ENCODE measurements at regions of chr11 and their contacts with region 1.

Region 1: GRCh38 chr11:62841361-62842184 is 2.2 kb upstream of the WDR74 start:
- DNase-seq: peak; percentile 96 to 98
- H3K4me3 ChIP-seq: peak overlapping the region; percentile 99
- H3K4me3 Mint-ChIP-seq: no peak overlapping the region
- H3K27ac Mint-ChIP-seq: no peak overlapping the region
- H3K4me1 ChIP-seq: no peaks in the 10 kb centered on the region
- H3K4me1 Mint-ChIP-seq: peaks cover 25% of the 10 kb centered on the region
- H3K27me3 ChIP-seq: no peaks in the 10 kb centered on the region
- H3K27me3 Mint-ChIP-seq: peaks cover 2% of the 10 kb centered on the region
- CTCF ChIP-seq: no peak

Region 2: DNA sequence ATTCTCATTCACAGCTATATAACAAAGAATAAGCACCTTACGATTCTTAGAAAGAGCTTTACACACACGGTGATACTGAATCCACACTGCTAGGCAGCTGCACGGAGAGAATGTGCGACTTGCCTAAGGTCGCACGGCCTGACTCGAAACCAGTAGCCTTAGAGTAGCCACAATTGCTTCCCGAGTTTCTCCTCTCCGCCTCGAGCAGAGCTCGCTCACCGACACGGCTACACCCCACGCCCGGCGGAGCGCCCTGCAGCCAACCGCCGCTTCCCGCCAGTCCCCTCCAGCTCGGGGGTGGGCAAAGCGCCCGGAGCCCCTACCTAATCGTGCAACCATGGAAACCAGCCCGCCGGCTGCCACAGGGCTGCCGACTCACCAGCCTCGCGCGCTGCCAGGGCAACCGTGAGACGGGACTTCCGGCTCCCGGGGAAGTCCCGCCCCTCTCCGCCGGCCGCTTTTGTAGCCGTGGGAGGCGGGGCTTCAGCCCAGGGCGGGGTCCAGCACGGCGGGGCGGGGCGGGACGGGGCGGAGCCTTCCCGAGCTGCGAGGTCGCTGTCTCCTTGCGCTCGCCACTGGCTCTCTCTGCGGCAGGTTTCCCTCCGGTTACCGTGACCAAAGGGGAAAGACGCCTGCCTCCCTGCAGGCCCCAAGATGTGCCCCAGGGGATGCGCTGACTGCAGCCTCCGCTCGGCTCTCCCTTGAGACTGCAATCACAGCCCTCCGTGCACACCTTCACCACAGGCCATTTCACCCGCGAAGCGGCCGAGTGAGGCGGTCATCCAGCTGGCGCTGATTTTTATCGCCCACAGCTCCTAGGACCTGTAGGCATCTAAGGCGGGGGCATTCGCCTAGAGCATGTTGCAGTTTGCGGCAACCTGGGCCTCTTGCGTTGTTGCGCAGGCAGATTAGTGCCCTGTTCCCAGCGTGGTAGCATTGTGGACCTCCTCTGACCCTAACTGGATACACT is 135.4 kb before region 1 on chr11:
- CTCF ChIA-PET with region 1: interaction called, 14 read pairs
- POLR2A ChIA-PET with region 1: no interaction called
- intact Hi-C with region 1: no loop called
- DNase-seq: peak; percentile 91 to 95
- H3K4me3 ChIP-seq: peak overlapping the region; percentile 55
- H3K4me3 Mint-ChIP-seq: peak overlapping the region; percentile 96
- H3K27ac Mint-ChIP-seq: peak overlapping the region; percentile 97
- H3K4me1 ChIP-seq: peaks cover 9% of the 10 kb centered on the region; the same call in 1 of the 2 replicates
- H3K4me1 Mint-ChIP-seq: peaks cover 18% of the 10 kb centered on the region
- H3K27me3 ChIP-seq: no peaks in the 10 kb centered on the region
- H3K27me3 Mint-ChIP-seq: no peaks in the 10 kb centered on the region
- CTCF ChIP-seq: no peak

Region 3: DNA sequence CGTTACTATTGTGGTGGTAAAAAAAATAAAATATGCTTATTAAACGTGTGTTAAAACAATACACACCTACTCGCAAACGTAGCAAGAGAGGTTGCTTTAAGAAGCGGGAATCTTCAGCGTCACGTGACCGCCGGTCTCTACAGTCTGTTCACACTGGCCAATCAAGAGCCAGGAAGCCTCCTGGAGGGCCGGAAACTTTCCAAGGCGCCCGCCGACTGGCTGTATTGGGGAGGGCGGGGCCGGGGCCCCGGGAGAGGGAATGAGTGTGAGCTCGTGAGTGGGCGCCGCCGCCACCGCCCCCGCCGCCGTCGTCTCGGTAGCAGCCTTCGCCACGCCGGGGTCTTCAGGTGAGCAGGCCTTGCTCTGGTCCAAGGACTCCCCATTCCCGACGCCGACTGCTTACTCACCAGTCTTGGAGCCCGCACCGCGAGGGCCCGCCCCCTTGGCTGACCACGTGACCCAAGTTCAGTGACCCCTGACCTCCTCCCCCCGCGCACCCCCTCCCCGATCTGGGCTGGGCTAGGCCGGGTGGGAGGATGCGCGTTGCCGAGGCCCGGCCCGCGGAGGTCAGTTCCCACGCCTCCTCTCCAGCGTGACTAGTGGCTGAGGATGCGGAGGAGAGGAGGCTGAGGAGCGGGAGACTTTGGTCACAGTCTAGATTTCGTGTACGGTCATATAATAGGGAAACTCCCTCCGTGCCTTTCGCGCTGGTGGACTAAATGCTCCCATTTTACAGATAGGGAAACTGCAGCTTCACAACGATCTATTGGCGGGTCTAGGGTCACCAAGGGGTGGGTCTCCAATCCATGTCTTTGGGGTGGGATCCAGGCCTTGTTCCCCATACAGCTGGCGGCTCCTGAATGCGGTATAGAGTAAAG is 70.2 kb before region 1 on chr11 and contains the start of gene TAF6L:
- CTCF ChIA-PET with region 1: interaction called, 4 read pairs
- POLR2A ChIA-PET with region 1: interaction called, 10 read pairs
- intact Hi-C with region 1: no loop called
- DNase-seq: peak; percentile 97 to 99
- H3K4me3 ChIP-seq: peak within 1 kb of the TSS; percentile 81
- H3K4me3 Mint-ChIP-seq: peak within 1 kb of the TSS; percentile 92
- H3K27ac Mint-ChIP-seq: peak within 1 kb of the TSS; percentile 99
- H3K4me1 ChIP-seq: peaks cover 6% of the 10 kb centered on the region
- H3K4me1 Mint-ChIP-seq: no peaks in the 10 kb centered on the region
- H3K27me3 ChIP-seq: no peaks in the 10 kb centered on the region
- H3K27me3 Mint-ChIP-seq: no peaks in the 10 kb centered on the region
- CTCF ChIP-seq: no peak
- total RNA-seq, gene TAF6L: 26.8 and 30.1 TPM in 2 replicates

Region 4: DNA sequence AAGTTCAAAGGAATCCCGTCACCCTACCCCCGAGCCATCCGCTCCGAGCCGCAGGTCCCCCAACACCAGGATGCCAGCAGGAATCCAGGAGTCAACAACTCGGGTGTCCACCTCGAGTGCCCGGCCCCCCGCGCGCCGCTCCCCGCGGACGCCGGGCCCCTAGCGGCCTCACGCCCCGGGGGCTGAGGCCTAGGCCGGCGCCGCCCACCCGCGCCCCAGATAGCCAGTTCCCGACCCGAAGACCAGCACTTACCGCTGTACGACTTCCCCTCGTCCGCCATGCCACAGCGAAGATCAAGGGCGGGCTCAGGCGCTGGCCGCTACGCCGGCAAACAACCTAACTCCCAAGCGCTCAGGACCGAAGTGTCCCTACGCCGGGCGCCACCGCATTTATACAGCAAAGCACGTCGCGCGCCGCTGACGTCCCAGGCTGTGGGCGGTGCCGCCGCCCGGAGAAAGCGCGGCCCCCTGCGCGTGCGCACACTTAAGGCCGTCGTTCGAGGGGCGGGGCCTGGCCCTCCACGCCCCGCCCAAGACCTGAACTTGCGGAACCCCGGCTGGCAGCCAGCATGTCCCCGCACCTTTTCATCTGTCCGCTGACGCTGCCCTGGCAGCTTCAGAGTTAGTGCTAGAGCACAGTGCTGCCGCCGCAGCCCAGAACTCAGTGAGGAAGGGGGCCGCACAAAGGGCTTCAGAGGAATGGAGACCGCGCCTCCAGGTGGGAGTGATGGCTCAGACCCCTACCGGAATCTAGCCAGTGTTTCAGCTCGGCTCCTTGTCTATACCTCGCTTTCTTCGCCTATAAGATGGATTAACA is 36.3 kb before region 1 on chr11 and contains the start of gene NXF1:
- CTCF ChIA-PET with region 1: no interaction called
- POLR2A ChIA-PET with region 1: interaction called, 15 read pairs
- intact Hi-C with region 1: no loop called
- DNase-seq: peak; percentile 94 to 98
- H3K4me3 ChIP-seq: peak within 1 kb of the TSS; percentile 58
- H3K4me3 Mint-ChIP-seq: peak within 1 kb of the TSS; percentile 92
- H3K27ac Mint-ChIP-seq: peak within 1 kb of the TSS; percentile 98
- H3K4me1 ChIP-seq: no peaks in the 10 kb centered on the region; the same call in 1 of the 2 replicates
- H3K4me1 Mint-ChIP-seq: peaks cover 11% of the 10 kb centered on the region
- H3K27me3 ChIP-seq: no peaks in the 10 kb centered on the region
- H3K27me3 Mint-ChIP-seq: no peaks in the 10 kb centered on the region
- CTCF ChIP-seq: peak in 1 of 2 experiments; percentile 27
- total RNA-seq, gene NXF1: 77.5 and 77.6 TPM in 2 replicates

Region 5: DNA sequence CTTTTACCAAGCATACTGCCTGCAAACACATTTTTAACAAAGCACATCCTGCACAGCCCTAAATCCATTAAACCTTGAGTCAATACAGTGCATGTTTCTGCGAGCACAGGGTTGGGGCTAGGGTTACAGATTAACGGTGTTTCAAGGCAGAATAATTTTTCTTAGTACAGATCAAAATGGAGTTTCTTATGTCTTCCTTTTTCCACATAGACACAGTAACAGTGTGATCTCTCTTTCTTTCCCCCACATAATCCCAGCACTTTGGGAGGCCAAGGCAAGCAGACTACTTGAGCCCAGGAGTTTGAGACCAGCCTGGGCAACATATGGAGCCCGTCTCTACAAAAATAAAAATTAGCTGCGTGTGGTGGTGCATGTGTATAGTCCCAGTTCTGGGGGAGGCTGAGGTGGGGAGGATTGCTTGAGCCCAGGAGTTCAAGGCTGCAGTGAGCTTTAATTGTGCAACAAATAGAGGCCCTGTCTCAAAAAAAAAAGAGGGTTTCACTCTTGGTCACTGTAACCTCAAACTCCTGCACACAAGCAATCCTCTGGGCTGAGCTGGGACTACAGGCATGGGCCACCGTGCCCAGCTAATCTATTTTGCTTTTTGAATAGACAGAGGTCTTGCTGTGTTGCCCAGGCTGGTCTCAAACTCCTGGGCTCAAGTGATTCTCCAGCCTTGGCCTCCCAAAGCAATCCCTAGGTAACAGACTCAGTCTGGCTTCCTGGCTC is 19.4 kb after region 1 on chr11:
- CTCF ChIA-PET with region 1: no interaction called
- POLR2A ChIA-PET with region 1: interaction called, 59 read pairs
- intact Hi-C with region 1: loop called (anchors 1 kb)
- DNase-seq: no peak
- H3K4me3 ChIP-seq: no peak overlapping the region
- H3K4me3 Mint-ChIP-seq: peak overlapping the region; percentile 42
- H3K27ac Mint-ChIP-seq: peak overlapping the region; percentile 51
- H3K4me1 ChIP-seq: peaks cover 29% of the 10 kb centered on the region
- H3K4me1 Mint-ChIP-seq: peaks cover 47% of the 10 kb centered on the region
- H3K27me3 ChIP-seq: no peaks in the 10 kb centered on the region
- H3K27me3 Mint-ChIP-seq: no peaks in the 10 kb centered on the region
- CTCF ChIP-seq: no peak

Region 6: DNA sequence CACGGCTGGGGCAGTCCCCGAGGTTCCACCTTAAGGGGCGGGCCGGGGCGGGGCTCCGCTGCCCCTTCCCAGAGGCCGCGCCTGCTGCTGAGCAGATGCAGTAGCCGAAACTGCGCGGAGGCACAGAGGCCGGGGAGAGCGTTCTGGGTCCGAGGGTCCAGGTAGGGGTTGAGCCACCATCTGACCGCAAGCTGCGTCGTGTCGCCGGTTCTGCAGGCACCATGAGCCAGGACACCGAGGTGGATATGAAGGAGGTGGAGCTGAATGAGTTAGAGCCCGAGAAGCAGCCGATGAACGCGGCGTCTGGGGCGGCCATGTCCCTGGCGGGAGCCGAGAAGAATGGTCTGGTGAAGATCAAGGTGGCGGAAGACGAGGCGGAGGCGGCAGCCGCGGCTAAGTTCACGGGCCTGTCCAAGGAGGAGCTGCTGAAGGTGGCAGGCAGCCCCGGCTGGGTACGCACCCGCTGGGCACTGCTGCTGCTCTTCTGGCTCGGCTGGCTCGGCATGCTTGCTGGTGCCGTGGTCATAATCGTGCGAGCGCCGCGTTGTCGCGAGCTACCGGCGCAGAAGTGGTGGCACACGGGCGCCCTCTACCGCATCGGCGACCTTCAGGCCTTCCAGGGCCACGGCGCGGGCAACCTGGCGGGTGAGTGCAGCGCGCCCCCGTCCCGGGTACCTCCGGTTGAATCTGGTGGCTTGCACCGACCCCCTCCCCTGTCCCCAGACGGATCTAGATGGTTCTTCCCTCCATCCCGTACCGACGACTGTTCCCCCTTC is 39.4 kb after region 1 on chr11 and contains the start of gene SLC3A2:
- CTCF ChIA-PET with region 1: interaction called, 3 read pairs
- POLR2A ChIA-PET with region 1: interaction called, 17 read pairs
- intact Hi-C with region 1: loop called (anchors 1 kb)
- DNase-seq: peak; percentile 87 to 92
- H3K4me3 ChIP-seq: peak within 1 kb of the TSS; percentile 99
- H3K4me3 Mint-ChIP-seq: peak within 1 kb of the TSS; percentile 97
- H3K27ac Mint-ChIP-seq: peak within 1 kb of the TSS; percentile 99
- H3K4me1 ChIP-seq: peaks cover 51% of the 10 kb centered on the region
- H3K4me1 Mint-ChIP-seq: peaks cover 43% of the 10 kb centered on the region
- H3K27me3 ChIP-seq: no peaks in the 10 kb centered on the region
- H3K27me3 Mint-ChIP-seq: no peaks in the 10 kb centered on the region
- CTCF ChIP-seq: peak; percentile 77 to 78
- total RNA-seq, gene SLC3A2: 763 and 879 TPM in 2 replicates

Region 7: GRCh38 chr11:62961017-62961570 is 119.5 kb after region 1 on chr11:
- CTCF ChIA-PET with region 1: no interaction called
- POLR2A ChIA-PET with region 1: no interaction called
- intact Hi-C with region 1: no loop called
- DNase-seq: no peak
- H3K4me3 ChIP-seq: no peak overlapping the region
- H3K4me3 Mint-ChIP-seq: no peak overlapping the region
- H3K27ac Mint-ChIP-seq: no peak overlapping the region
- H3K4me1 ChIP-seq: peaks cover 23% of the 10 kb centered on the region
- H3K4me1 Mint-ChIP-seq: peaks cover 15% of the 10 kb centered on the region
- H3K27me3 ChIP-seq: no peaks in the 10 kb centered on the region
- H3K27me3 Mint-ChIP-seq: no peaks in the 10 kb centered on the region
- CTCF ChIP-seq: no peak